ENCODE measurements at regions of chrX and their contacts with region 1.

Region 1: GRCh38 chrX:30889147-30890140 is at the start of gene TAB3:
- DNase-seq: peak; percentile 94
- H3K4me3 Mint-ChIP-seq: peak within 1 kb of the TSS; percentile 83
- H3K27ac Mint-ChIP-seq: peak within 1 kb of the TSS; percentile 94
- H3K4me1 Mint-ChIP-seq: peaks cover 31% of the 10 kb centered on the region
- H3K27me3 Mint-ChIP-seq: no peaks in the 10 kb centered on the region
- total RNA-seq, gene TAB3: 20.8 to 21.6 TPM

Region 2: GRCh38 chrX:30652527-30653414 is 236.7 kb before region 1 on chrX:
- CTCF ChIA-PET with region 1: no interaction called
- POLR2A ChIA-PET with region 1: interaction called, 15 read pairs
- DNase-seq: peak; percentile 93
- H3K4me3 Mint-ChIP-seq: peak overlapping the region; percentile 84
- H3K27ac Mint-ChIP-seq: peak overlapping the region; percentile 96
- H3K4me1 Mint-ChIP-seq: peaks cover 55% of the 10 kb centered on the region
- H3K27me3 Mint-ChIP-seq: no peaks in the 10 kb centered on the region

Region 3: DNA sequence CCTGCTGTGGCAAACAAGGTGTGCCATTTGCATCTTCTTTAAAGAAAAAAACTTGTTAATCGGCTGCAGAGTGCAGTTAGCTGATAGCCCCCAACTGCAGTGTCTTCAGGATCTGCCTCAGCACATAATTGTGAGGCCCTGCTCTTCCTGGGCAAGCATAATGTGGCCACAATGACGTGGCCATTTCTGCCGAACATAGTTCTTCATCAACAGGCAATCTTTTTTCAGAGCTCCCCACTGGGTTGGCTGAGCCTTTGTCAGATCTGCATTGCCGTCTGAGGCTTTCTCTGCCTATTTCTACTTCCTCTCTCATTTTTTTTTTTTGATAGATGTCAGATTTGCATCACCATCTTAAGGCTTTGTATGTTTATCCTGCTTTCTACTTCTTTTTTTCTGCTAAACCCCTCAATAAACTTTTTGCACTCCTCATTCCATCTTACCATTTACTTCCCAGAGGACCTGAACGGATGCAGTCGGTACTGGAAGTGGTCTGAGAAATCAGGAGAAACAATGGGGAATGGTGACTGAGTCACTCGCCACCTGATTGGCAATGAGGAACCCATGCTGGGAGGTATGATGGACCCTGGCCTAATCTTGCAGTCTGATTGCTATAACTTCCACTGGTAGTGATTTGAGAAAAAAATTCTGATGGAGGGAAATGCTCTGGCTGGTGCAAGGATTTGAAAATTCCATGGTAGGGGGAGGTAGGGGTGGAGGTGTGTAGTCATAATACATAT is 20.8 kb after region 1 on chrX:
- CTCF ChIA-PET with region 1: no interaction called
- POLR2A ChIA-PET with region 1: interaction called, 10 read pairs
- DNase-seq: peak; percentile 17
- H3K4me3 Mint-ChIP-seq: no peak overlapping the region
- H3K27ac Mint-ChIP-seq: peak overlapping the region; percentile 40
- H3K4me1 Mint-ChIP-seq: peaks cover 10% of the 10 kb centered on the region
- H3K27me3 Mint-ChIP-seq: no peaks in the 10 kb centered on the region

Region 4: DNA sequence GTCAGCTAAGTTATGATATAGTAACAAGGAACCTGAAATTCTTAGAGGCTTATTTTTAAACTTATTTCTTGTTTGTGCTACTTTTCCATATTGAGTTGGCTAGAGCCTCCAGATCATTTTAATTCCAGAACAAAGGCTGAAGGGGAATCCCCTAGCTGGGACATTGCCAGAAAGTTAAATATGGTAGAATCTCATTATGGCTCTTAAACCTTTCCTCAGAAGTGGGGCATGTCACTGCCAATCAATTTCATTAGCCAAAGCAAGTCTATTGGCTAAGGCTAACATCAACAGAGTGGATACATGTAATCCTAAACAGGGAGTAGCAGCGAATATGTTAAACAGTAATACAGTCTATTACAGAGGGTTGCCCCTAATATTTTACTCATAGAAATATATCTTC is 135.4 kb after region 1 on chrX:
- CTCF ChIA-PET with region 1: no interaction called
- POLR2A ChIA-PET with region 1: no interaction called
- DNase-seq: no peak
- H3K4me3 Mint-ChIP-seq: no peak overlapping the region
- H3K27ac Mint-ChIP-seq: no peak overlapping the region
- H3K4me1 Mint-ChIP-seq: no peaks in the 10 kb centered on the region
- H3K27me3 Mint-ChIP-seq: no peaks in the 10 kb centered on the region